Activated T-helper 2 cell treated with anti-CD3 and anti-CD28 coated beads, Interferon-gamma antibody, Interleukin-2, Interleukin-4, amounts not matched to agents 10 μg/mL and 5 μg/mL and 100 μg/mL, durations not matched to agents 14 hours and 24 hours and 36 hours (primary cell): ENCODE measurements at regions of chr15 and their contacts with region 1.

Region 1: DNA sequence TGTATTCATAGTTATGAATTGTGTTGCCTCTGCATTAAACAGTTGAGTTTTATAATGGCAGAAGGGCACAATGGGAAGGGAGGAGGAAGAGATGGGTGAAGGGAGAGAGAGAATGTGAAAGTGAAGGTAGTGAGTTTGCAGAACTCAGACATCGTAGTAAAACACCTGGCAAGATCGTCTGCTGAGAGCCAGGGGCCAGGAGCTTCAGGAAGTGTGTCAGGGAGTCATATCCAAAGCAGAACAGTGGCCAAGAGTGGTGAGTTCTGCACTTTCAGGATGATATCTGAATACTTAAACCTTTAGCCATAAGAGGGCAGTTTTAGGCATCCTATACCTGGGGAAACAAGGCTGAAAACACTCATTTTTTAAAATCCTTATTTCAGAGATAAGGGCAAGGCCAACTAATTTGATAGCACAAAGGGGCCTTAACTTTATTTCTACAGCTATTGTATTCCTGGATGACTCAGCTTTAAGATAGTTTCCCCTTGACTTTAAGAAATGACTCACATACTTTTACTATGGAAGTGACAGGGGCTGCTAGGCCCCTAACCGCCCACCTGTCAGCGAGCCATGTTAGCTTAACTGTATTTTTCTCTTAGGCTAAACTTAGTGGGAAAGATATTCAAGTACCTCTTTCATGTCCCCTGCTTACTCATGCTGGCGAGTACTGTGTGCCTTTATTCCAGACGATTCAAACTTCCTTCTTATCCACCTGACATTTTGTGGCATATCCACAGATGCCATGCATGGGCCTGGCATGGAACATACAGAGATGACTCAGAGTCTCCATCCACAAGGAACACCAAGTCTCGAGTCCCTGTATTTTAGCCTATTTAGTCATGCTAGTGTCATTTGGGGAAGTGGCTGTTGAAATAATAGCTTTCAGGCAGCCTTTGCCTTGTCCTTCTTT is 53.9 kb downstream of the RLBP1 start:
- DNase-seq: no peak
- H3K4me3 Mint-ChIP-seq: peak overlapping the region; percentile 44
- H3K27ac Mint-ChIP-seq: peak overlapping the region; percentile 86
- H3K4me1 Mint-ChIP-seq: peaks cover 29% of the 10 kb centered on the region
- H3K27me3 Mint-ChIP-seq: no peaks in the 10 kb centered on the region

Region 2: GRCh38 chr15:89068325-89068784 is 99.2 kb before region 1 on chr15:
- intact Hi-C with region 1: loop called (anchors 1 kb)
- DNase-seq: no peak
- H3K4me3 Mint-ChIP-seq: no peak overlapping the region
- H3K27ac Mint-ChIP-seq: peak overlapping the region; percentile 70
- H3K4me1 Mint-ChIP-seq: peaks cover 11% of the 10 kb centered on the region
- H3K27me3 Mint-ChIP-seq: no peaks in the 10 kb centered on the region

Region 3: DNA sequence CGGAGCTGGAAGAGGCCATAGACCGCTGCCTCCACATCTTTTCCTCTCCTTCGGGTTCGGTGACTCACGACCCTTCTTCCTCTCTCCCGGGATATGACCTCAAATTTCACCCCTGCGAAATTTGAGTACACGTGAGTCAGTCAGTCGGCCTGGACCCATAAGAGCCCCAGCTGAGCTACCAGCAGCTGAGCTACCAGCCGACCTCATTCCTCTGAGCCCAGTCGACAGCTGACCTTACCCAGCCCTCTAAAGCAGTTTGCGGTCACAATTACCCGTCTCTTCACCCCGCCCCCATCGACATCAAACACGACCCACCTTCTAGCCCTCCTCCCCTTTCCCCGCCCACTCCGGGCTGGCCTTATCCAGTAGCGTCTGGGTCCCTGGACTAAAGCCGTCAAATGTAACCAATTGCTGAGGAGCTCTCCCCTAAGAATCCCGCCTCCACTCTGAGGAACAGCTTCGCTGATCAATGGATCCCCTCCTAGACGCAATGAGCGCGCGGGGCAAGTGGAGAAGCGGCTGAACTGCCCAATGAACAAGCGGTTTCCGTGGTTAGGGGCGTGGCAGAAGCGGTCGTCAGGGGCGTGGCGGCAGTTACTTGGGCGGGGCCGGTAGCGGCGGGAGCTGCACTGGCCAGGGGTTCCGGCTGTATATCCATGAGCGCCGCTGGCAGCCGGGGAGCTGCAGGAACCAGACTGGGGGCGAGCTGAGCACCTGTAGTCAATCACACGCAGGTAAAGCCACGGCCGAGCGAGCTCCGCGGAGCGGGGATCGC is 79.5 kb before region 1 on chr15 and contains the start of gene ABHD2:
- intact Hi-C with region 1: loop called (anchors 1 kb)
- DNase-seq: peak; percentile 99
- H3K4me3 Mint-ChIP-seq: no peak within 1 kb of the TSS
- H3K27ac Mint-ChIP-seq: peak within 1 kb of the TSS; percentile 67
- H3K4me1 Mint-ChIP-seq: peaks cover 34% of the 10 kb centered on the region
- H3K27me3 Mint-ChIP-seq: no peaks in the 10 kb centered on the region
- total RNA-seq, gene ABHD2: 57.2 and 59.3 TPM in 2 replicates

Region 4: GRCh38 chr15:89143503-89144162 is 23.9 kb before region 1 on chr15:
- intact Hi-C with region 1: loop called (anchors 1 kb)
- DNase-seq: no peak
- H3K4me3 Mint-ChIP-seq: no peak overlapping the region
- H3K27ac Mint-ChIP-seq: no peak overlapping the region
- H3K4me1 Mint-ChIP-seq: peaks cover 29% of the 10 kb centered on the region
- H3K27me3 Mint-ChIP-seq: no peaks in the 10 kb centered on the region

Region 5: DNA sequence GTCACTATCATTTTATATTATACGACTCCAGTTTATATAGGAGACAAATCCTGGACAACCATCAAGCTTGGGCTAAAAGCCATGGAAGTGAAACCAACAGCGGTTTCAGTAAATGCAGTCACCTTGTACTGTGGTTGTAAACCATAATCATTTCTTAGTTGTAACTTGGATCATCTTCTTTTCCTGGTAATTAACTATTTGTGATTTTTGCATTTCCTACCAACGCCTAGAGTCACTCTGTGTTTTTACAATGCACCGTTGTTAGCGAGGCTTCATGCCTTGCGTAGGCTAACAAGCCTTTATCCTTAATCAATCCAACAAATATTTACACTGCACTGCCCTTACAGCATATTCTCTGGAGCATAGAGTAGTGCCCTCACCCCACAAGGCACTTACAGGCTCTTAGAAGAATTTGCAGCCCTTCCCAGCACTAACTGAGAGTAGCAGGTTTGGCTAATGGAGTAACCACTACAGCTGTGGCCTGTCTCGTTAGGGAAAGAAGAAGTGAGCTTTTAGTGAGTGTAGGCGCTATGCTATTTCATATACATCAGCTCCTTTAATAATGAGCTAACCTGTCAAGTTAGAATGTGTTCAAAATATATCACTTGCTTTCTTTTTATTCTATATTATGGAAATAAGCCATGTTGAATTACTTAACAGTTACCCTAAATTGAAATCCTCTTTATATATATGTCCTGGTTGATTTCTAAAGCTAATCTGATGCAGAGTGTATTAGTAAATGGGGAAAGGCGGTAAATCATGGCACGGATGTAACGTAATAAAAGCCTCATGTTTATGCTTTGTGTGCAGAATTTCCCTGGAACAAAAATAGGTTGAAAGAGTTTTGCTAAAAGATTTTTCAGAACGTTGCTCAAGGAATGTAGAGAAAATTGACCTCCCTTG is 16.5 kb before region 1 on chr15:
- intact Hi-C with region 1: loop called (anchors 1 kb)
- DNase-seq: no peak
- H3K4me3 Mint-ChIP-seq: no peak overlapping the region
- H3K27ac Mint-ChIP-seq: no peak overlapping the region
- H3K4me1 Mint-ChIP-seq: peaks cover 12% of the 10 kb centered on the region
- H3K27me3 Mint-ChIP-seq: no peaks in the 10 kb centered on the region